ENCODE measurements at regions of chr7 and their contacts with region 1.

Region 1: DNA sequence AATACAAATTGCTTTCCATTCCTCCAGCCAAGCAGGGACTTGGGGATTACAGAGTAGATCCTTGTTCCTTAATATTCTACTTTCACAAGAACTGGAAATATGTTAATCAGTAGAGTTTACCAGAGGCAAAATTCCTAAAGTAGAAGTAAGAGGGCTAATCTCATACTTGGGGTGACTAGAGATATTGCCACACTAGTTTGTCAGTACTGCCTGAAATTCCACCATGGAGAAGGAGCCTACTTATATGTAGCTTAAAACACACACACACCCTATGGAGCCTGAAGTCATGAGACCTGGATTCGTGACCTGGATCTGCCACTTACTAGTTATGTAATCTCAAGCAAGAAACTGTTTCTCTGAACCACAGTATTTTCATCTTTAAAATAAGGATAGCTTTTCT is 33.9 kb downstream of the STRIP2 start:
- DNase-seq: no peak
- ATAC-seq: no peak
- H3K4me3 Mint-ChIP-seq: no peak overlapping the region
- H3K27ac Mint-ChIP-seq: no peak overlapping the region
- H3K4me1 Mint-ChIP-seq: no peaks in the 10 kb centered on the region
- H3K27me3 Mint-ChIP-seq: no peaks in the 10 kb centered on the region

Region 2: DNA sequence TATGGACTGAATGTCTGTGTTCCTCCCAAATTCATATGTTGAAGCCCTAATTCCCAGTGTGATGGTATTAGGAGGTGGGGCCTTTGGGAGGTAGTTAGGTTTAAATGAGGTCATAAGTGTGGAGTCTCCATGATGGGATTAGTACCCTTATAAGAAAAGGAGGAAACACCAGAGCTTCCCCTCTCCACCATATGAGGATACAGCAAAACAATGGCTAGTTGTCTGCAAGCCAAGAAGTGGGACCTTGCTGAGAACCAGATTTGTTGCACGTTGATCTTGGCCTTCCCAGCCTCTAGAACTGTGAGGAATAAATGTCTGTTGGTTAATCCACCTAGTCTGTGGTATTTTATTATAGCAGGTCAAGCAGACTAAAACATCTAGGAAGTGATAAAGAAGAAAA is 141.0 kb before region 1 on chr7:
- CTCF ChIA-PET with region 1: no interaction called
- POLR2A ChIA-PET with region 1: no interaction called
- DNase-seq: no peak
- ATAC-seq: no peak
- H3K4me3 Mint-ChIP-seq: no peak overlapping the region
- H3K27ac Mint-ChIP-seq: no peak overlapping the region
- H3K4me1 Mint-ChIP-seq: no peaks in the 10 kb centered on the region
- H3K27me3 Mint-ChIP-seq: no peaks in the 10 kb centered on the region

Region 3: DNA sequence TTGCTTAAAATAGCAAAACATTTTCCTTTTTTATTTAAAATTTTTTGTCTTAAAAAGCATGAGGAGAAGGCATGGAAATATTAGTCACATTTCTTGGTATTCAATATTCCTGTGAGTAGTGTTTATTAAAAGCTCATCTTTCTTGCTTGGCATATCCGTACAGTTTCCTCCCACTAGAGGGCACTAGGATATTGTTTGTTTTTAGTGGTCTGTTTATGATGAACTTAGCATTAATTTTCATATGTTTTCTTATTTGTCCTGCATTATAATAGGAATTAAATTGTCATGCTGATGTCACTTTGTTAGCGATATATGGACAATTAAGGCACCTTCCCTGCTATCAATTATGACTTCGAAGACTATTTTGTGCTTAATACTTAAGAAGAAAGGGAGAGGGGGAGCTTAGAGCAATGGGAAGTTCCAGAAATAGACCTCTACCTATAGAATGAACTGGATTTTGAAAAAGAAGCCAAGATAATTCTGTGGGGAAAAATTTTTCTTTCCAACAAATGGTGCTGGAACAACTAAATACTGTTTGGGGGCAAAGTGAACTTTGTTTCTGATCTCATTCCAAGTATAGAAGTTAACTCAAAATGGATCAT is 124.9 kb before region 1 on chr7:
- CTCF ChIA-PET with region 1: interaction called, 43 read pairs
- POLR2A ChIA-PET with region 1: no interaction called
- DNase-seq: peak; percentile 44
- ATAC-seq: peak; percentile 52
- H3K4me3 Mint-ChIP-seq: no peak overlapping the region
- H3K27ac Mint-ChIP-seq: no peak overlapping the region
- H3K4me1 Mint-ChIP-seq: peaks cover 41% of the 10 kb centered on the region
- H3K27me3 Mint-ChIP-seq: no peaks in the 10 kb centered on the region

Region 4: GRCh38 chr7:129401967-129402860 is 65.9 kb before region 1 on chr7:
- CTCF ChIA-PET with region 1: interaction called, 11 read pairs
- POLR2A ChIA-PET with region 1: no interaction called
- DNase-seq: peak; percentile 26
- ATAC-seq: peak; percentile 47
- H3K4me3 Mint-ChIP-seq: no peak overlapping the region
- H3K27ac Mint-ChIP-seq: no peak overlapping the region
- H3K4me1 Mint-ChIP-seq: no peaks in the 10 kb centered on the region
- H3K27me3 Mint-ChIP-seq: no peaks in the 10 kb centered on the region

Region 5: GRCh38 chr7:129550693-129551360 is 82.7 kb after region 1 on chr7:
- CTCF ChIA-PET with region 1: no interaction called
- POLR2A ChIA-PET with region 1: no interaction called
- DNase-seq: no peak
- ATAC-seq: no peak
- H3K4me3 Mint-ChIP-seq: no peak overlapping the region
- H3K27ac Mint-ChIP-seq: no peak overlapping the region
- H3K4me1 Mint-ChIP-seq: peaks cover 5% of the 10 kb centered on the region
- H3K27me3 Mint-ChIP-seq: peaks cover 8% of the 10 kb centered on the region

Measured in activated CD8-positive, alpha-beta T cell treated with anti-CD3 and anti-CD28 coated beads, Interleukin-2, amount 10 ng/mL, durations not matched to agents 7 days and 5 days (primary cell).